PC-3 (cell line): ENCODE measurements at regions of chr1 and their contacts with region 1.

Region 1: GRCh38 chr1:98794196-98794886 is 132.8 kb downstream of the SNX7 start:
- DNase-seq: peak; percentile 88
- ATAC-seq: peak; percentile 68
- H3K4me3 ChIP-seq: no peak overlapping the region
- H3K27ac ChIP-seq: no peak overlapping the region
- H3K4me1 ChIP-seq: peaks cover 32% of the 10 kb centered on the region
- H3K27me3 ChIP-seq: no peaks in the 10 kb centered on the region
- CTCF ChIP-seq: peak; percentile 91

Region 2: GRCh38 chr1:98824736-98825135 is 30.4 kb after region 1 on chr1:
- CTCF ChIA-PET with region 1: no interaction called
- POLR2A ChIA-PET with region 1: no interaction called
- intact Hi-C with region 1: no loop called
- DNase-seq: no peak
- ATAC-seq: no peak
- H3K4me3 ChIP-seq: no peak overlapping the region
- H3K27ac ChIP-seq: no peak overlapping the region
- H3K4me1 ChIP-seq: no peaks in the 10 kb centered on the region
- H3K27me3 ChIP-seq: no peaks in the 10 kb centered on the region
- CTCF ChIP-seq: no peak

Region 3: GRCh38 chr1:98991127-98992012 is 197.0 kb after region 1 on chr1:
- CTCF ChIA-PET with region 1: no interaction called
- POLR2A ChIA-PET with region 1: no interaction called
- intact Hi-C with region 1: loop called (anchors 10 kb)
- DNase-seq: peak; percentile 81
- ATAC-seq: peak; percentile 95
- H3K4me3 ChIP-seq: no peak overlapping the region
- H3K27ac ChIP-seq: peak overlapping the region; percentile 55
- H3K4me1 ChIP-seq: peaks cover 16% of the 10 kb centered on the region
- H3K27me3 ChIP-seq: no peaks in the 10 kb centered on the region
- CTCF ChIP-seq: peak; percentile 88

Region 4: DNA sequence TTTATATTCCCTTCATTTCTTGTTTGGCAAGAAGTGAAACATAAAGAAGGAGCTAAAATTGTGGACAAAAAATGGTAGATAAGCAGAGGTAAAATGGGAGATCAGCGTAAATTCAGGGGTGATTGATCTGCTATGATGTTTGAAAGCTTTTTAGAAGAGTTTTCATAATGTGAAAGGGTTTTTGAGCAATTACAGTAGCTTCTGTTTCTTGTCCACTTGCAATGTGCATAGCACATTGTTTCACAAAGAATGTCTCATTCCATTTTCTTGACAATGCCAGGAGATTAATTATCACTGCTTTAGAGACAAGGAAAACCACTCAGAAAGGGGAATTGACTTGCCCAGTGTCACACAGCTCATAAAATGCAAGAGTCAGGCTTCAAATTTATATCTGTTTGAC is 404.1 kb after region 1 on chr1:
- CTCF ChIA-PET with region 1: no interaction called
- POLR2A ChIA-PET with region 1: interaction called, 14 read pairs
- intact Hi-C with region 1: no loop called
- DNase-seq: no peak
- ATAC-seq: no peak
- H3K4me3 ChIP-seq: no peak overlapping the region
- H3K27ac ChIP-seq: no peak overlapping the region
- H3K4me1 ChIP-seq: no peaks in the 10 kb centered on the region
- H3K27me3 ChIP-seq: no peaks in the 10 kb centered on the region
- CTCF ChIP-seq: no peak